Heart right ventricle (tissue), 16 donors: ENCODE measurements at regions of chr12 and their contacts with region 1.

Region 1: DNA sequence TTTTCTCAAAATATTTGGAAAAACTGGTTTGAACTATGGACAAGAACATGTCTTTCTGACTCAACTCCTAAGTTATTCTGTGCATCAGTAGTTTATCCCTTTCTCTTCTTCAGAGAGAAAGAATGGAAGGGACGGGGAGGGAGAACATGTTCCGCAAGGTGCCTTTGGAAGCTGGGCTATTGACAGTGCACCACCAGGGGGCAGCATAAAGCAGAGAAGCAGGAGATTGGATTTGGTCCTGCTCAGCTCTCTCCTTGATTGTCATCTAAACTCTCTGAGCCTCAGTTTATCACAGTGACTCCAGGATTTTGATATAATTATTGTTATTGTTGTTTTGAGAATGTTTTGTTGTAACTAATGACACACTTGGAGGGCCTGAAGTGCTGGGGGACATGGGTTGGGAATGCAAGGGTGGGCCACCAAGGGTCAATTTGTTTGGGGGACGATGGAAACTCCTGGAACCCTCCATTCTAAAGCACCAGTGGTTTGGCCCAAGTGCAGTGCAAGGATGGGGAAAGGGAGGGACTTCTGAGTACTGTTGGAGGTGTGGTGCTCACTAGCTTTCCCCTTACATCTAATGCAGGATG is 45.3 kb upstream of the ANO6 start:
- DNase-seq: peak; percentile 72 to 86
- ATAC-seq: peak in 7 of 8 donors; percentile 55 to 86 (median 77)
- H3K4me3 ChIP-seq: no peak overlapping the region
- H3K27ac ChIP-seq: no peak overlapping the region
- H3K4me1 ChIP-seq: peaks cover 0 to 14% (median 0%) of the 10 kb centered on the region in 9 donors
- H3K27me3 ChIP-seq: no peaks in the 10 kb centered on the region
- CTCF ChIP-seq: peak; percentile 71 to 95 (median 91)

Region 2: GRCh38 chr12:45231515-45232166 is 61.1 kb after region 1 on chr12:
- intact Hi-C with region 1: no loop called
- DNase-seq: no peak
- ATAC-seq: no peak
- H3K4me3 ChIP-seq: no peak overlapping the region
- H3K27ac ChIP-seq: peak overlapping the region in 8 of 10 donors; percentile 85 to 97 (median 87)
- H3K4me1 ChIP-seq: peaks cover 16 to 66% (median 58%) of the 10 kb centered on the region in 9 donors
- H3K27me3 ChIP-seq: no peaks in the 10 kb centered on the region
- CTCF ChIP-seq: no peak

Region 3: DNA sequence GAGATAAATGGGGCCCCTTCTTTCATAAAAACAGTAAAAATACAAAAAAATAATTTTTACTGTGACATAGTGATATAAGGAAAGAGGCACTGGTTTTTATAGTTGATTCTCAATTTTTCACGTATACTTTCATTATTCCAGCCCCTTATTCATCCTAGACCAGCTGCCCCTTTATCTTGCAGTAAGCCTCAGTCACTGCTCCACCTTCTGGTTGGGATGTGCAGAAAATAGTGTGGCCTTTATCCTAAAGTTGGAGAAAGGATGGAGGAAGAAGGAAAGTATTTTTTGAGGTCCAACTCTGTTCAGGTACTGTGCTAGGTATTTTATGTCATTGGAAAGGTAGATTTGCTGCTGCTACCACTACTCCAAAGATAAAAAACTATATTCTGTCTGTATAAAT is 218.0 kb after region 1 on chr12:
- intact Hi-C with region 1: loop called in 7 of 10 experiments (anchors 2 to 10 kb)
- DNase-seq: peak in 1 of 2 donors; percentile 49
- ATAC-seq: peak in 6 of 8 donors; percentile 47 to 77 (median 58)
- H3K4me3 ChIP-seq: no peak overlapping the region
- H3K27ac ChIP-seq: no peak overlapping the region
- H3K4me1 ChIP-seq: peaks cover 0 to 5% (median 0%) of the 10 kb centered on the region in 9 donors
- H3K27me3 ChIP-seq: no peaks in the 10 kb centered on the region
- CTCF ChIP-seq: peak; percentile 11 to 79 (median 61)

Region 4: GRCh38 chr12:45415393-45415817 is 244.9 kb after region 1 on chr12:
- intact Hi-C with region 1: loop called in 1 of 10 experiments (anchors 10 kb)
- DNase-seq: peak; percentile 18 to 61
- ATAC-seq: peak; percentile 68 to 98 (median 95)
- H3K4me3 ChIP-seq: no peak overlapping the region
- H3K27ac ChIP-seq: peak overlapping the region in 6 of 10 donors; percentile 25 to 74 (median 58)
- H3K4me1 ChIP-seq: peaks cover 0 to 16% (median 4%) of the 10 kb centered on the region in 9 donors
- H3K27me3 ChIP-seq: no peaks in the 10 kb centered on the region
- CTCF ChIP-seq: no peak

Region 5: DNA sequence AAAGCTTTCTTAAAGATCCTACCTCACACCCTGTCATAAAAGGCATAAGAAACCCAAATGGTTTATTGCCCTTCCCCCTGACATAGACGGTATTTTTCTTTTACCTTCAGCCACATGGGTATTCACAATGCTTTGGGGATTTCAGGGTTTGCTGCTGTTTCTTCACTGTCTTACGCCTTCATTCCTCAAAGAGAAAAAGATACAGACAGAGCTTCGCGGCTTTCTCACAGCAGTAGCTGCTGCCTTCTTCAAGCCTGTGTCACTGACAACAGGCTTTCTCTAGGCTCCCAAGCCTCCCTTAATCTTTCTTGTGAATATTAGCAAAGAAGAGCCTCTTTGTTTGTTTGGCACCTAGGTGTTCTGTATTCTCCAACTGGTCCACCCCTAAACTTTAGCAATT is 361.6 kb after region 1 on chr12:
- intact Hi-C with region 1: loop called in 1 of 10 experiments (anchors 10 kb)
- DNase-seq: no peak
- ATAC-seq: no peak
- H3K4me3 ChIP-seq: no peak overlapping the region
- H3K27ac ChIP-seq: no peak overlapping the region
- H3K4me1 ChIP-seq: no peaks in the 10 kb centered on the region
- H3K27me3 ChIP-seq: no peaks in the 10 kb centered on the region
- CTCF ChIP-seq: no peak